PC-9 (cell line): ENCODE measurements at regions of chr19 and their contacts with region 1.

Region 1: GRCh38 chr19:38290631-38291157 is 13.4 kb upstream of the C19orf33 start:
- DNase-seq: peak; percentile 90 to 91
- H3K4me3 ChIP-seq: no peak overlapping the region; the same call in 1 of the 2 replicates
- H3K27ac ChIP-seq: peak overlapping the region; percentile 75
- H3K4me1 ChIP-seq: peaks cover 44% of the 10 kb centered on the region
- H3K27me3 ChIP-seq: no peaks in the 10 kb centered on the region
- CTCF ChIP-seq: no peak

Region 2: GRCh38 chr19:38277969-38278680 is 12.6 kb before region 1 on chr19:
- CTCF ChIA-PET with region 1: no interaction called
- POLR2A ChIA-PET with region 1: interaction called, 4 read pairs
- intact Hi-C with region 1: loop called (anchors 1 kb)
- DNase-seq: peak; percentile 38 to 78
- H3K4me3 ChIP-seq: peak overlapping the region; percentile 39
- H3K27ac ChIP-seq: peak overlapping the region; percentile 75
- H3K4me1 ChIP-seq: peaks cover 64% of the 10 kb centered on the region
- H3K27me3 ChIP-seq: no peaks in the 10 kb centered on the region
- CTCF ChIP-seq: no peak

Region 3: DNA sequence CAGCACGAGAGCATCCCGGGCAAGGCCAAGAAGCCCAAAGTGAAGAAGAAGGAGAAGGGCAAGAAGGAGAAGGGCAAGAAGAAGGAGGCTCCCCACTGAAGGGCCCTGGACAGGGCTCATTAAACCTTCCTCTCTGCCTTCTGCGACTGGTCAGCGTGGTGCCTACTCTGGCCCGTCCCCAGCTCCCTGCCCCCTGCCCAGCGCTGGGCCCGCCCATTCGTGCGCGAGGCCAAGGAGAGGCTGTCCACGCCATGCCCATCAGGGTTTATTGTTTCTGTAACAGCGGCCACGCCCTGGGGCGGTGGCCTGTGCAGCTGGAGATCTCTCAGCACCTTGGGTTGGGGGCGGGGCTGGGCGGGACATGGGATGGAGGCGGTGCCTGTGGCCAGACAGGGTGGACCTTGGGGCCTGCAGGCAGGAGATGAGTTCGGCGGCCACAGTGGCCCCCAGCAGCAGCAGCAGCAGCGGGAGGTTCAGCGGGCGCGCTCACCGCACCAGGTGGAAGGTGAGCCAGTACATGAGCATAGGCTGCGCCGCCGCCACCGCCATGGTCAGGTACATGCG is 14.3 kb after region 1 on chr19:
- CTCF ChIA-PET with region 1: no interaction called
- POLR2A ChIA-PET with region 1: interaction called, 4 read pairs
- intact Hi-C with region 1: loop called (anchors 2 kb)
- DNase-seq: peak; percentile 95 to 98
- H3K4me3 ChIP-seq: peak overlapping the region; percentile 72
- H3K27ac ChIP-seq: peak overlapping the region; percentile 94
- H3K4me1 ChIP-seq: peaks cover 33% of the 10 kb centered on the region
- H3K27me3 ChIP-seq: no peaks in the 10 kb centered on the region
- CTCF ChIP-seq: no peak

Region 4: DNA sequence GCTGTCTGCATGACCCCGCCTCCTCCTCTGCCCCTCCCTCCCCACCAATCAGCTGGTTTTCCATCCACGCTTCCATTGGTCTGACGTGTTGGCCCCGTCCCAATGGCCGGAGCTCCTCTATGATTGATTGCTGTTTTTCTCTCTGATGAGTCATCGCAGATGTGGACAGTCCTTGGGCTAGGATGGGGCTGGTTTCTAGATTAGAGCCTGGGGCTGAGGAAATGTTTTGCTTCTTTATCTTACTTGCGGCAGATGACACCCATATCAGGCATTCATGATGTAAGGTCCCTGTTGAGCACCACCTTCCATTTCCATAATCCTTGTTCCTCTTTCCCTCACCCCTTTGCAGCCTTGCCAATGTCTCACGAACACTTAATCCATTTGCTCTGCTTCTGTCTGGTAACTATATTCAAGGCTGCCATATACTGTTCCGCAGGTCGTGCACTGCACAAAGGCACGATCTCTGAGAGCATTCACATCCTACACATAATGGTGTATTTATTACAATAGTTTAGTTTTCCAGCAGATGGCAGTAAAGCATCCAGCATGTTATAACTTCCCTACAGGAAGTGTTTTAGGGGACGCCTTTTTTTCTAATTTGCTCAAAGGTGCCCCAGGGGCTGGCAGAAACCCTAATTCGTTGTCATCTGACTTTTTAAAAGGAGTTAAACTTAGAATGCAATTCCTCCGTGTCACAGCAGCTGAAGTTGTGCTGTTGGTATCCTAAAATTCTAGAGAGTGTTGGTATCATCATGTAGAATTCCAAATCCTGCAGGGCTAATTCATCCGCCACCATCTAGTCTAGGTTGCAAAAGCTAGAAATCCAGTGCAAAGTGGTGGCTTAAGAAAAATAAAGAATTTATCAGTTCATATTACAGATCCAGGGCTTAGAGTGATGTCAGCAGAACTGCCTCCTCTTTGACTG is 253.6 kb after region 1 on chr19:
- CTCF ChIA-PET with region 1: interaction called, 11 read pairs
- POLR2A ChIA-PET with region 1: no interaction called
- intact Hi-C with region 1: no loop called
- DNase-seq: peak; percentile 60 to 87
- H3K4me3 ChIP-seq: no peak overlapping the region
- H3K27ac ChIP-seq: peak overlapping the region; percentile 47
- H3K4me1 ChIP-seq: peaks cover 24% of the 10 kb centered on the region
- H3K27me3 ChIP-seq: no peaks in the 10 kb centered on the region
- CTCF ChIP-seq: peak; percentile 83